Transverse colon (tissue), 4 donors: ENCODE measurements at regions of chr15 and their contacts with region 1.

Region 1: GRCh38 chr15:49235446-49236124 is 65.5 kb downstream of the GALK2 start:
- DNase-seq: peak; percentile 44
- H3K4me3 ChIP-seq: no peak overlapping the region
- H3K27ac ChIP-seq: peak overlapping the region; percentile 1 to 52 (median 32)
- H3K4me1 ChIP-seq: peaks cover 0 to 32% (median 18%) of the 10 kb centered on the region in 4 donors
- H3K27me3 ChIP-seq: no peaks in the 10 kb centered on the region
- CTCF ChIP-seq: peak; percentile 61 to 78 (median 66)
- EP300 ChIP-seq: no peak
- POLR2A ChIP-seq: no peak

Region 2: DNA sequence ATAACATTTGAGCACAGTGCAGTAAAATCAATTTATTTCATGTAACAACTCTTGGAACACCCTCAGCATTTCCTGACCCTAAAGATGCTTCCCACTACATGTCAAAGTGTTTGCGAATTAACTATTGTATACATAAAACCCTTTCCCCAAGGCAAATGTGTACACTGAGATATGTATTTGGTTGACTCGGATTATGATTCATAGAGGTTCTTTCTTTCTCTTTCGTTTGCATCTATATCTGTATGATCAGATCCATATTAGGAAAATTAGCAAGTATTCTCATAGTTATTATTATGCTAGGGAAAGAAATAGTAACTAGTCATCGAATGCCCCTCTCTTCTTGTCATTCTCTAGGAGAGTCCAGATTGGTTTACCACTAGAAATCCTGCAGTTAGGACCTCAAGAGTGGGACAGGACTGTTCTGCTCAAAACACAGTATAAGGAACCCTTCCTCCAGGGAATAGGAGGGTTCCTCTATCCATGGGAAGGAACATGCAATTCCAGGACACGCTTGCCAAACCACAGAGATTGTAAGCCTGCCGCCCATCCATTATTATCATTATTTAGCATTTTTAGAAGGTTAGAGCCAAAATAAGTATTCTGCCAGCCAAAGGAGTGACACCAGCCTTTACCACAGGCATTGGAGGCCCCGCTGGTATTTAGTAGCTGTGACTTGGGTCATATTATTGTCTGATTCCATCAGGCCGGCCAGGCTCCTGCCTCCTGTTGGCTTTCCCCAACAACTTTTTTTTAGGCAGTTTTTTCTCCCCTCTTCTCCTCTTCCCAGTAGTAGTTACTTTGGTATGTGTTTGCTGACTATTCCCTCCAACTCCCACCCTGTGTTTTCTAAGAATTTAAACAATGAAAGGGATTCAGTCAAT is 35.2 kb after region 1 on chr15:
- in situ Hi-C with region 1: no loop called
- intact Hi-C with region 1: no loop called
- DNase-seq: no peak
- H3K4me3 ChIP-seq: no peak overlapping the region
- H3K27ac ChIP-seq: peak overlapping the region in 2 of 4 donors; percentile 3 to 17
- H3K4me1 ChIP-seq: no peaks in the 10 kb centered on the region
- H3K27me3 ChIP-seq: no peaks in the 10 kb centered on the region
- CTCF ChIP-seq: no peak
- EP300 ChIP-seq: no peak
- POLR2A ChIP-seq: no peak

Region 3: DNA sequence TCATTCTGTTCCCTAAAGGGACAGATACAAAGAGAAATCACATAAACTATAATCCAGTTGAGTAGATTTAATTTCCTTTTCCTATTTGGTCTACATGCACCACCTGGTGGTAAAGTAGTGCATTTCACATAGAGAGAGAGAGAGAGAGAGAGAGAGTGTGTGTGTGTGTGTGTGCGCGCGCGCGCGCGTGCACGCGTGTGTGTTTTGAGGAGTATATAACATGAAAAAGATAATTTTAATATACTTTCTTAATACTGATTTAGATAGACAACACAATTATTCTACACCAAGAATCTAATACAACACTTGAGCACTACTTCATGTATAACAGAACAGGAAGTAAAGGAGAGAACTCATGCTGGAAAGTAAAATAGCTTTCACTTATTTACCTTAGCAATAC is 186.4 kb after region 1 on chr15:
- in situ Hi-C with region 1: loop called (anchors 10 to 25 kb)
- intact Hi-C with region 1: loop called (anchors 5 kb)
- DNase-seq: peak; percentile 24
- H3K4me3 ChIP-seq: peak overlapping the region in 2 of 4 donors; percentile 3 to 43
- H3K27ac ChIP-seq: peak overlapping the region; percentile 71 to 80 (median 72)
- H3K4me1 ChIP-seq: peaks cover 0 to 2% (median 0%) of the 10 kb centered on the region in 4 donors
- H3K27me3 ChIP-seq: no peaks in the 10 kb centered on the region
- CTCF ChIP-seq: peak; percentile 73 to 96 (median 85)
- EP300 ChIP-seq: no peak
- POLR2A ChIP-seq: no peak

Region 4: DNA sequence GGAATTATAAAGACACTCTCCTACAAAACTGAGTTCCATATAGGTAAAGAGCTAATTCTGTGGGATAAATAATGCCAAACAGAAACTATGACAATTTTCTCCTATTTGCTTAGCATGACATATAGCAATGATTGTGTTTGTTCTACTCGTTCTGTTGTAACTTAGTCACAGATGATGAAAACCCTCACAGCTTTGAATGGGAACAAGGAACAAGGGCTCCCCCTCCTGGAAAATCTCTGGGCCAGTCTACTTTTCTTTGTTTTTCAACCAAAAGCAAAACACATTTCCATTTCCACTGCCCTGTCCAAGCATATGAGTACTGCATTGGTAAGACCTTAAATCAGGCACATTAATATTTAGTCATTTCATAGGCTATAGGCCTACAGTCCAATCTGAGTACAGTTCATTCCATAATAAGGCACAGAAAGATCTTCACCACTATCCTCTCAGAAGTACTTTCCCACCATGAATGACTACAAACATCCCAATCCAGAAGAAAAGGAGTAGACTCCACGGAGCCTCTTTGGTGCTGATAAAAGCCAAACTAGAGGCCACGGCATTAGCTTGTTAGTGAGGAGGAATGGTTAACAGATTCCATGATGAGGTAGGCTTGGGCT is 816.3 kb after region 1 on chr15:
- in situ Hi-C with region 1: no loop called
- intact Hi-C with region 1: loop called (anchors 10 kb)
- DNase-seq: peak; percentile 43
- H3K4me3 ChIP-seq: no peak overlapping the region
- H3K27ac ChIP-seq: no peak overlapping the region
- H3K4me1 ChIP-seq: peaks cover 4 to 27% (median 7%) of the 10 kb centered on the region in 4 donors
- H3K27me3 ChIP-seq: no peaks in the 10 kb centered on the region
- CTCF ChIP-seq: peak; percentile 42 to 58 (median 46)
- EP300 ChIP-seq: no peak
- POLR2A ChIP-seq: no peak

Region 5: GRCh38 chr15:50134520-50135024 is 899.0 kb after region 1 on chr15:
- in situ Hi-C with region 1: loop called in 1 of 4 experiments (anchors 25 kb)
- intact Hi-C with region 1: loop called (anchors 10 kb)
- DNase-seq: no peak
- H3K4me3 ChIP-seq: no peak overlapping the region
- H3K27ac ChIP-seq: peak overlapping the region in 3 of 4 donors; percentile 14 to 73 (median 54)
- H3K4me1 ChIP-seq: no peaks in the 10 kb centered on the region
- H3K27me3 ChIP-seq: no peaks in the 10 kb centered on the region
- CTCF ChIP-seq: no peak
- EP300 ChIP-seq: no peak
- POLR2A ChIP-seq: no peak